Panc1 (cell line): ENCODE measurements at regions of chr18 and their contacts with region 1.

Region 1: DNA sequence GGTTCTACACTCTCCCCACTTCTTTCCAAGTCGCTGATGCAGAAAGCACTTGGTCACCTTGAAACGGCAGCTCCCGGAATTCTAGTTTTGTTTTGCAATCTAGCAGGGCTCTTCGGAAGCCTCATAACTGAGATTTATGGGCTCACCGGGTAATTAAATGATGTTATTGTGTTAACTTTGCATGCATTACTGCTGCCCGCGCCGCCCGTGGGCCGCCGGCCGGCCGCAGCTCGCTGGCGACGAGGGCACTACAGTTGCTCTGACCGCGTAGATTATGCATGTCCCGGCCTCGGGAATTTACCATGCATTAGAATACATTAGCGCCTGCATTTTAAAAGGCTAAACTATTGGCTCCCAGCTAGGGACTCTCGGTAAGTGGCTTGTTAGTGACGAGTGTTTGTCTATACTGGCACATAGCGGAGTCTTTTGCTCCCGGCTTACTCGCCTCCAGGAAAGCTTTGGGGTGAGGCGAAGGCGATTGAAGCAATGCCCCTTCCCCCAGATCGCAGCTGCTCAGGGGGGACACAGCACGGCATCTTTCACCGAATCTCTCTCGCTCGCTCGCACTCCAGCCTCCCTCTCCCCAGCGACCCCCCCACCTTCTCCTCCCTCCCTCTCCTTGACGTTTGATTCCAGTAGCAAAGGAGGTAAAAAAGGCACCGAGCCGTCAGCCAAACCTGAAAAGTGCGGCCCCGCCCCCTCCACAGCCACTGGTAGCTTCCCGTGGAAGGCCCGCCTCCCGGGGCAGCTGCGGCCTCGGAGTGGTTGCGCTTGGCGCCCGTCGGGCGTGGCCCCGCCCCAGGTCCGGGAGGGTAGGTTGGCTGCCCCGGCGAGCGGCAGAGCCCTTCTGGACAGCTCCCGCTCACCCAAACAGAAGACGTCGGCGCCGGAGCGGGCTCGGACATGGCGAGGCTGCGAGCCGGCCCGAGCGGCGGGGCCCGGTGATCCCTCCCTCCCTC is at the start of gene ONECUT2:
- DNase-seq: no peak
- ATAC-seq: peak; percentile 94
- H3K4me3 ChIP-seq: peak within 1 kb of the TSS; percentile 59 to 80
- H3K27ac ChIP-seq: no peak within 1 kb of the TSS
- H3K4me1 ChIP-seq: no peaks in the 10 kb centered on the region
- H3K27me3 ChIP-seq: peaks cover 11% of the 10 kb centered on the region
- CTCF ChIP-seq: no peak
- total RNA-seq, gene ONECUT2: 0.59 TPM

Region 2: DNA sequence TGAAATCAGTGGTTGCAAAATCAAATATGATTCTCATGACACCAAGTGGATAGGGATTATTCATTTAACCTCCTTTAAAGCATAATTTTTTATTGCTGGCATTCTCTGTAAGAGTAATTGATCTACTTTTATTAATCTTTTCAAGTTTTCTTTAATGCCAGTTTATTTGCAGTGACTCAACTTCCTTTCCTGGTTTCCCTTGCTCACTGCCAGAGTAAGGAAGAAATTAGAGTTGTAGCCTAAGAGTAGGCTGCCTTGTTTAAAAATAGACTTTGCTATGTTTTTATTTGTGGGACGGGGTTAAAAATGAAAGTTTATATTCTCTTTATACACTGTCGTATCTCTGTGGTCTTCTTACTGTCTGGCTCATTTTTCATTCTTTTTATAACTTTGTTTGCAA is 635.1 kb before region 1 on chr18:
- CTCF ChIA-PET with region 1: no interaction called
- POLR2A ChIA-PET with region 1: no interaction called
- in situ Hi-C with region 1: no loop called
- intact Hi-C with region 1: loop called (anchors 10 kb)
- DNase-seq: no peak
- ATAC-seq: no peak
- H3K4me3 ChIP-seq: no peak overlapping the region
- H3K27ac ChIP-seq: no peak overlapping the region
- H3K4me1 ChIP-seq: no peaks in the 10 kb centered on the region
- H3K27me3 ChIP-seq: no peaks in the 10 kb centered on the region
- CTCF ChIP-seq: no peak

Region 3: DNA sequence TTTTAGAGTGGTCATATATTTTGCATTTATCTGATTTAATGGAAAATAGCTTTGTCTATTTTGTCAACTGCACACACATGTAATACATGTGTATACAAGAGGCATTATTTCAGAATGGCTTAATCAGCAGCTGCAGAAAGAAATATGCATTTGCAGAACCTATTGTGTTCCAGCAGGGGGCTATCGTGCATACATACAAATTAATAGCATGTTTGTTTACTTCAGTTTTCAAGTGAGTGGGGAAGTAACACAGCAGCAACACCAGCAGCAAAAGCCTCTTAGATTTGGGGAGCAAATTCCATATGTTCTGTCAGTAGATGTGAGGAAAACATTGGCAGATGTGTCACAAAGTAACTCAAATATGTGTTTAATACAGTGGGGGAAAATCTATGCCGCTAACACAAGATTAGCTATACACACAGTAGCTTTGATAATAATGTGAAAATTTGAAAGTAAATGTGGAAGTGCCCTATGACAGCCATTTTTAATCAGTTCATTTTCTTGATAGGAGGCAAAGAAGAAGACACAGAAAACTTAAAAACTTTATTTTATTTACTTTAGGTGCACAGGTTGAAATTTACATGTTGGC is 565.5 kb before region 1 on chr18:
- CTCF ChIA-PET with region 1: interaction called, 11 read pairs
- POLR2A ChIA-PET with region 1: no interaction called
- in situ Hi-C with region 1: no loop called
- intact Hi-C with region 1: loop called (anchors 5 kb)
- DNase-seq: peak; percentile 36
- ATAC-seq: no peak
- H3K4me3 ChIP-seq: no peak overlapping the region
- H3K27ac ChIP-seq: no peak overlapping the region
- H3K4me1 ChIP-seq: no peaks in the 10 kb centered on the region
- H3K27me3 ChIP-seq: no peaks in the 10 kb centered on the region
- CTCF ChIP-seq: peak; percentile 63; the same call in 1 of the 2 replicates

Region 4: GRCh38 chr18:57276739-57277298 is 158.0 kb before region 1 on chr18:
- CTCF ChIA-PET with region 1: no interaction called
- POLR2A ChIA-PET with region 1: interaction called, 12 read pairs
- in situ Hi-C with region 1: no loop called
- intact Hi-C with region 1: no loop called
- DNase-seq: no peak
- ATAC-seq: no peak
- H3K4me3 ChIP-seq: no peak overlapping the region
- H3K27ac ChIP-seq: no peak overlapping the region
- H3K4me1 ChIP-seq: no peaks in the 10 kb centered on the region
- H3K27me3 ChIP-seq: peaks cover 2% of the 10 kb centered on the region; the same call in 1 of the 2 replicates
- CTCF ChIP-seq: no peak

Region 5: DNA sequence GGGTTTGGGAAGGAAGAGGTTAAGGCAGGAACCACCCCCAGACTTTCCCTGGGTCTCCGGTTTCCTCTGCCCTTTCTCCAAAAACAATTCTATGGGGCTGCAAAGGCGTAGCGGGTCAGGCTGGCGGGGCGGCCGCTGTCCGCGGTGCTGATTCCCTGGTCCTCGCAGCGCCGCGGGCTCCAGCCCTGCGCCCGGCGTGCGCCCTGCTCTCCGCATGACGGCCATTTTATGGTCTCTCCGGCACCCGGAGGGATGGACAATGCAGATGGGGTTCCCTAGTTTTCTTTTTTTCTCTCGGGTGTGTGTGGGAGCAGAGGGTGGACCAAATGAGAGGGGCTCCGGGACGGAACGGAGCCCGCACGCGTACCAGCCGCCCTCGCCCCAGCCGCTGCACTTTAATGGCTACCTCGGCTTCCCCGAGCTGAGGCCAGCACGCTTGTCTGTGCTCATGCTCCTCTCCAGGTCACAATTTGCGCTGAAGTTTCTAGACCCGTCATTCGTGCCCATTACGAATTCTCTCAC is 80.8 kb before region 1 on chr18:
- CTCF ChIA-PET with region 1: no interaction called
- POLR2A ChIA-PET with region 1: interaction called, 10 read pairs
- in situ Hi-C with region 1: no loop called
- intact Hi-C with region 1: no loop called
- DNase-seq: no peak
- ATAC-seq: no peak
- H3K4me3 ChIP-seq: no peak overlapping the region; a peak in 1 of 4 replicates
- H3K27ac ChIP-seq: no peak overlapping the region
- H3K4me1 ChIP-seq: no peaks in the 10 kb centered on the region
- H3K27me3 ChIP-seq: no peaks in the 10 kb centered on the region; the same call in 1 of the 2 replicates
- CTCF ChIP-seq: no peak

Region 6: DNA sequence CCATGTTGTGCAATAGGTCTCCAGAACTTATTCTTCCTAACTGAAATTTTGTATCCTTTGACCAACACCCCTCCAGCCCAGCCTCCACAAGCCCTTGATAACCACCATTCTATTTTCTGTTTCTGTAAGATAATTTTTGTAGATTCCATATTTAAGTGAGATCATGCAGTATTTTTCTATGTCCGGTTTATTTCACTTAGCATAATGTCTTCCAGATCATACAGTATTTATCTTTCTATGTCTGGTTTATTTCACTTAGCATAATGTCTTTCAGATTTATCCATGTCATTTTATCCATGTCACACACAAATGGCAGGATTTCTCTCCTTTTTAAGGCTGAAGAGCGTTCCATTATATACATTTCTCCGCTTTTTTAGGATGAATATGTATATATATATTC is 24.1 kb before region 1 on chr18:
- CTCF ChIA-PET with region 1: no interaction called
- POLR2A ChIA-PET with region 1: no interaction called
- in situ Hi-C with region 1: no loop called
- intact Hi-C with region 1: no loop called
- DNase-seq: no peak
- ATAC-seq: no peak
- H3K4me3 ChIP-seq: no peak overlapping the region
- H3K27ac ChIP-seq: no peak overlapping the region
- H3K4me1 ChIP-seq: no peaks in the 10 kb centered on the region
- H3K27me3 ChIP-seq: no peaks in the 10 kb centered on the region
- CTCF ChIP-seq: no peak

Region 7: DNA sequence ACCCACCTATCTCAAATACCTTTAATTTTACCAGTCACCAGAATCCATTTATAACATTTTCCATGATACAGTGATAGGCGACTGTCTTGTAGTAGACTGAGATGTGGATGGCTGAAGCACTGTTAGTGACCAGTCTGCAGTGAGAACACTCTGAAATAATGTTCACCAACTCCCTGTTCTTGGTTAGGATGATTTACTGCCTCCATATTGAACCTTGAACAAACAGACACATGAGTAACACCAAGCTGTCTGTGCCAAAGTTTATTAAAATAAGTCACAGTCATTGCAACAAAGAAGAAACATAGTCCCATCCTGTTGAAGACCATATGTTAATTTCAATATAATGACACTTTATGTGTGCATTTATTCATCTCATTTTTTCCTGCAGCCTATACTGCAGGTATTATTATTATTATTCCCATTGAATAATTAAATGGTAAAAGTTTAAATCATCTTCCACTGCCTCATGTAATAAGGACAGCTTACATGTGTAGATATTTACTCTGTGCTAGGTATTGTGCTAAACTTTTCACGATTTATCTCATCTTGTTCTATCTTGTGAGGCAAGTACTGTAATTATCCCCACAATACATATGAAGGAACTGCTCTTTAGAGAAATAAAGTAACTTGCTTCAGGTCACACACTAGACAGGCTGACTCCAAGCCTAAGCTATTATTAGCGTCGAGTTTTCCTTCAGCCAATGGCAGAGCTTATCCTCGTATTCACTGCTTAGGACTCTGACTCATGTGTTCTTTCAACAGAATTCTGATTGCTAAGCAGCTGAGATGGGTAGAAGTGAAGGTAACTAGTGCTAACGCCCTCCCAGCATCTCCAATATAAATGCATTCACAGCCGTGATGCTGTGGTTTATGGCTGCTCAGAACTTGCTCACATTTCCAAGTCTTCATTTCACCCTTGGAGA is 62.8 kb after region 1 on chr18:
- CTCF ChIA-PET with region 1: no interaction called
- POLR2A ChIA-PET with region 1: no interaction called
- in situ Hi-C with region 1: no loop called
- intact Hi-C with region 1: no loop called
- DNase-seq: no peak
- ATAC-seq: no peak
- H3K4me3 ChIP-seq: no peak overlapping the region
- H3K27ac ChIP-seq: no peak overlapping the region
- H3K4me1 ChIP-seq: no peaks in the 10 kb centered on the region
- H3K27me3 ChIP-seq: no peaks in the 10 kb centered on the region
- CTCF ChIP-seq: no peak